Activated CD4-positive, alpha-beta T cell treated with anti-CD3 and anti-CD28 coated beads, Interleukin-2, amount 10 ng/mL, durations not matched to agents 24 days and 14 days (primary cell): ENCODE measurements at regions of chr10 and their contacts with region 1.

Region 1: GRCh38 chr10:28532383-28533175 is at the start of gene WAC:
- DNase-seq: peak; percentile 99
- H3K4me3 Mint-ChIP-seq: peak within 1 kb of the TSS; percentile 98
- H3K27ac Mint-ChIP-seq: peak within 1 kb of the TSS; percentile 100
- H3K4me1 Mint-ChIP-seq: peaks cover 45% of the 10 kb centered on the region
- H3K27me3 Mint-ChIP-seq: peaks cover 1% of the 10 kb centered on the region
- total RNA-seq, gene WAC: 125 and 130 TPM in 2 replicates

Region 2: GRCh38 chr10:26697163-26697921 is 1835.2 kb before region 1 on chr10 and contains the start of gene PDSS1:
- intact Hi-C with region 1: loop called (anchors 5 kb)
- DNase-seq: peak; percentile 92
- H3K4me3 Mint-ChIP-seq: peak within 1 kb of the TSS; percentile 99
- H3K27ac Mint-ChIP-seq: peak within 1 kb of the TSS; percentile 97
- H3K4me1 Mint-ChIP-seq: peaks cover 31% of the 10 kb centered on the region
- H3K27me3 Mint-ChIP-seq: no peaks in the 10 kb centered on the region
- total RNA-seq, gene PDSS1: 39.0 and 39.8 TPM in 2 replicates

Region 3: DNA sequence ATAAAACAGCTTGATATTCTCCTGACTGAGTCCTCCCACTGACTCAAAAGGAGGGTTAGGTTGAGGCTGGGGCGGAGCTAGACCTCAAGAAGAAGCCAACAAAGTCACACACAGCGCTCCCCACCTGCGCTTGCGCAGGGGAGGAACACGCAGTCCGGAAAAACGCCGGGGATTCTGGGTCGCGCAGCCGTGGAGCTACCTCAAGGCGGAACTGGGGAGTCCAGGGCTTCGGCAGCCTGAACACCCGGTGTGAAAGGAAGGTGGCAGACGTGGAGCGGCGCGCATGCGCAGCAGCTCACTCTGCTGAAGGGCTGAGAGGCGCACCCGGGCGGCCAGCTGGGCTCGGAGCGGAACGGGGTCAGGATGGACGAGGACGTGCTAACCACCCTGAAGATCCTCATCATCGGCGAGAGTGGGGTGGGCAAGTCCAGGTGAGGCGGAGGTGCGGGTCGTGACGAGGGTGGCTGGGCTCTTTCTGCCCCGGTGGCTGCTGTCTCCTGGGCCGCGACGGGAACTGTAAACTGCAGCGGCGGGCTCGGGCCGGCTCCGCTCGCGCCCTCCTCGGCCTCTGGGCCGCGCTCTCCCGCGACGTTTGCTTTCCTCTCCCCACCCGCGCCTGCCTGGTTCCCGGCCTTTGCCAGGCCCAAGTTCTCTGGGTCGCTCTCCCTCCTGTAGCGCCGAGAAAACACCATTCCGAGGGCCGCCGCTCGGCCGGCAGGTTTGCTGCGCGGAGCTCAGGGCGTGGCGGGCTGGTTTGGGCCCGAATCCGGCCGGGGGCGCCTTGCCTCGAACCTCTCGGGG is 1028.4 kb before region 1 on chr10 and contains the start of gene RAB18:
- intact Hi-C with region 1: loop called (anchors 5 kb)
- DNase-seq: peak; percentile 99
- H3K4me3 Mint-ChIP-seq: peak within 1 kb of the TSS; percentile 99
- H3K27ac Mint-ChIP-seq: peak within 1 kb of the TSS; percentile 98
- H3K4me1 Mint-ChIP-seq: peaks cover 44% of the 10 kb centered on the region
- H3K27me3 Mint-ChIP-seq: peaks cover 6% of the 10 kb centered on the region
- total RNA-seq, gene RAB18: 55.4 and 58.3 TPM in 2 replicates

Region 4: GRCh38 chr10:28302638-28303488 is 229.7 kb before region 1 on chr10 and contains the start of gene MPP7:
- intact Hi-C with region 1: loop called (anchors 2 kb)
- DNase-seq: peak; percentile 99
- H3K4me3 Mint-ChIP-seq: peak within 1 kb of the TSS; percentile 96
- H3K27ac Mint-ChIP-seq: peak within 1 kb of the TSS; percentile 82
- H3K4me1 Mint-ChIP-seq: peaks cover 29% of the 10 kb centered on the region
- H3K27me3 Mint-ChIP-seq: peaks cover 45% of the 10 kb centered on the region
- total RNA-seq, gene MPP7: 0.43 and 0.54 TPM in 2 replicates

Region 5: GRCh38 chr10:28314211-28314610 is 218.4 kb before region 1 on chr10:
- intact Hi-C with region 1: no loop called
- DNase-seq: no peak
- H3K4me3 Mint-ChIP-seq: no peak overlapping the region
- H3K27ac Mint-ChIP-seq: no peak overlapping the region
- H3K4me1 Mint-ChIP-seq: no peaks in the 10 kb centered on the region
- H3K27me3 Mint-ChIP-seq: peaks cover 11% of the 10 kb centered on the region

Region 6: GRCh38 chr10:28432210-28432676 is 100.3 kb before region 1 on chr10:
- intact Hi-C with region 1: loop called (anchors 1 kb)
- DNase-seq: peak; percentile 66
- H3K4me3 Mint-ChIP-seq: no peak overlapping the region
- H3K27ac Mint-ChIP-seq: no peak overlapping the region
- H3K4me1 Mint-ChIP-seq: peaks cover 3% of the 10 kb centered on the region
- H3K27me3 Mint-ChIP-seq: peaks cover 6% of the 10 kb centered on the region

Region 7: DNA sequence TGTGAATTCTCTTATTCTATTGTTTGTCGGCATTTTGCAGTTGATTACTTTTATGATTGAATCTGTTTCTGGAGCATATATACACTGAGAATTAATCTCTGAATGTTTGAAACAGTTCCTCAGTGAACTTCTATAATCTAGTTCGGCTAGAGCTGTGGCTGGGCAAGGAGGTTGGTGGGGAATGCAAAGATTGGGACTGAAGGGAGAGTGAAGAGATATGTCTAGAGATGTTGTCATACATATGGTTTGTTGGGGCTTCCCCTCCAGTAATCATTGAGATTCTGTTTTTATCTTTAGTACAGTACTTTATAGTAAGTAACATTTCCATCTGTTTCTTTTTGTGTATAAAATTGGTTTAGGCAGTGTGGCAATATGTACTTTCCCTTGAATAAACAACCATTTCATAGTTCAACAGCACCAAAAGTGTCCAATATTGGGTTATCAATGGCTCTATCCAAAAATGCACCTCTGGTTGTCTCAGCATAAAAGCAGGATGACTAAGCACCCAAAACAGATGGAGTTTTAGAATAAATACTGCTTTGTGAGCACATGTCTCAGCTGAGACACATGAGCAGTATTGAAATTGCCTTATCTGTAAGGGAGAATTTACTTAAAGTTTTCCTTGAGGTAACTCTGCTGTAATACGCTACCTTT is 37.1 kb after region 1 on chr10:
- intact Hi-C with region 1: loop called (anchors 5 kb)
- DNase-seq: no peak
- H3K4me3 Mint-ChIP-seq: no peak overlapping the region
- H3K27ac Mint-ChIP-seq: peak overlapping the region; percentile 87
- H3K4me1 Mint-ChIP-seq: peaks cover 44% of the 10 kb centered on the region
- H3K27me3 Mint-ChIP-seq: no peaks in the 10 kb centered on the region

Region 8: GRCh38 chr10:28676968-28677887 is 144.6 kb after region 1 on chr10 and contains the start of gene BAMBI:
- intact Hi-C with region 1: loop called (anchors 5 kb)
- DNase-seq: peak; percentile 97
- H3K4me3 Mint-ChIP-seq: peak within 1 kb of the TSS; percentile 75
- H3K27ac Mint-ChIP-seq: peak within 1 kb of the TSS; percentile 30
- H3K4me1 Mint-ChIP-seq: peaks cover 19% of the 10 kb centered on the region
- H3K27me3 Mint-ChIP-seq: peaks cover 72% of the 10 kb centered on the region
- total RNA-seq, gene BAMBI: 0.31 and 0.44 TPM in 2 replicates